Psoas muscle (tissue), 8 donors: ENCODE measurements at regions of chr17 and their contacts with region 1.

Region 1: GRCh38 chr17:57987580-57988421 is at the start of gene VEZF1:
- DNase-seq: peak; percentile 85 to 92
- ATAC-seq: peak; percentile 63 to 72 (median 67)
- H3K4me3 ChIP-seq: peak within 1 kb of the TSS; percentile 86
- H3K27ac ChIP-seq: peak within 1 kb of the TSS; percentile 94
- H3K4me1 ChIP-seq: peaks cover 78% of the 10 kb centered on the region
- H3K27me3 ChIP-seq: no peaks in the 10 kb centered on the region
- CTCF ChIP-seq: no peak
- total RNA-seq, gene VEZF1: 45.7 to 92.5 (median 70.7) TPM

Region 2: DNA sequence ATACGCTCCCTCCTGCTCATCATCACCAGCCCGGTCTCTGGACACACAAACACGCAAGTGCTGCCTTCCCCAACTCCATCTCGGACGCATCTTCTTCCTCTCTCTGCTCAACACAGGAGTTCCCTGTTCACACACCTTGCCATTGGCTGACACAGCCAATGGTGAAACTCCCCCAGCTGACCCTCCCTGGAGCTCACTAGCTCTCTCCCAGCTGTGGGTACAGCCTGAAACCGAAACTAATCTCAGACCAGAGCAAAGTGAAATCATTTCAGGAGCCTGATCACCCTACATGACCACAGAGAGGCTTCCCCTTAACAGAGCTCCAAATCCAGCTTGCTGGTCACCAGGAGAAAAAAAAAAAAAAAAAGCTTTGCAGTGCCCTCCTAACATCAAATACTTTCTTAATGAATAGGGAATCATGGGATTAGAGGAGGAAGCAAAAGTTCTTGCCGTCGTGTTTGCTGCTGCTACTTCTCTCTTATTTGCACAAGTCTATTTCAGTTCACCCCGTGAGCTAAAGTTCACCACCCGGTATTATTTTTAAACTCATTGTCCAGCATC is 40.9 kb before region 1 on chr17:
- intact Hi-C with region 1: loop called (anchors 2 to 5 kb)
- DNase-seq: peak in 1 of 2 donors; percentile 63
- ATAC-seq: peak; percentile 15 to 53 (median 42)
- H3K4me3 ChIP-seq: peak overlapping the region; percentile 59
- H3K27ac ChIP-seq: peak overlapping the region; percentile 99
- H3K4me1 ChIP-seq: peaks cover 96% of the 10 kb centered on the region
- H3K27me3 ChIP-seq: no peaks in the 10 kb centered on the region
- CTCF ChIP-seq: no peak